ENCODE measurements at regions of chr6 and their contacts with region 1.

Region 1: DNA sequence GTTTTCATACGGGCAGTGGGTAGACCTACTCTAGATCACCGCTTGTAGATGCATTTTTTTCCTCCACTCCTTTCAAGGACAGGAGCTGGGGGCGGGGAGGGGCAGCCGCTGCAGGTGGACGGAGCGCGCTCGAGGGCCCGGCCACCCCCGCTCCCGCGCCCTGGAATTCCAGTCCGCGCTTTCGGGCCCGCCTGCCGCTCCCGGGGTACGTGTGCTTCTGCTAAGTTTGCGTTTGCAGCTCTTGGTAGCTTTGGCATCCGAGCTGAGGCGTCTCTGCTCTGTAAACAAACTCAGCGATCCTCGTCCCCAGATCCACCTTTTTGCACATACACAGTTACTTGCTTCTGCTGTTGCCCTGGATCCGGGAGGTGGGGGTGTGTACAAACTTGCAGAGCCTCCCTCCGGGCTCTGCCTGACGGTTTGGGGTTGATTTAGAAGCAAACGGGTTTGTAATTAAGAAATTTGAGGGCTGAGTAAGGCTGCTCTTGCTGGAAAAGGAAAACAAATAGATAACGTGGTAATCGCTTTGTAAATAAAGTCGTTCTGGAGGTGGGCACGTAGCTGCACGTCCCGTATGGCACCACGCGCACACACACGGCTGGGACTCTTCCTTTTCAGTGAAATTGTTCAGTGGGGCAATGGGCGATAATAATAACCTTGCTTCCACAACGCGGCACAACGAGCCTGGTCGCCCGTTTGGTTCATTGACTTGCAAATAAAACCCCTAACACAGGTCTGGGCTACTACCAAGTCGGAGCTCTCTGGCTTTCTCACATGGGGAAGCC is 976 bp upstream of the CITED2 start:
- DNase-seq: peak; percentile 64 to 93
- ATAC-seq: peak; percentile 63 to 79
- H3K4me3 ChIP-seq: peak overlapping the region; percentile 83
- H3K27ac ChIP-seq: peak overlapping the region; percentile 95 to 100
- H3K4me1 ChIP-seq: peaks cover 39% of the 10 kb centered on the region
- CTCF ChIP-seq: no peak
- EP300 ChIP-seq: no peak
- POLR2A ChIP-seq: no peak
- RAD21 ChIP-seq: peak; percentile 20 to 24; a peak in 4 of 5 replicates

Region 2: GRCh38 chr6:139452176-139452876 is 76.9 kb after region 1 on chr6:
- CTCF ChIA-PET with region 1: no interaction called
- POLR2A ChIA-PET with region 1: no interaction called
- DNase-seq: no peak
- ATAC-seq: no peak
- H3K4me3 ChIP-seq: no peak overlapping the region
- H3K27ac ChIP-seq: no peak overlapping the region
- H3K4me1 ChIP-seq: no peaks in the 10 kb centered on the region
- CTCF ChIP-seq: no peak
- EP300 ChIP-seq: no peak
- POLR2A ChIP-seq: no peak
- RAD21 ChIP-seq: no peak

Region 3: GRCh38 chr6:139540276-139540675 is 164.9 kb after region 1 on chr6:
- CTCF ChIA-PET with region 1: interaction called, 3 read pairs
- POLR2A ChIA-PET with region 1: interaction called, 12 read pairs
- DNase-seq: no peak
- ATAC-seq: no peak; a peak in 1 of 6 replicates
- H3K4me3 ChIP-seq: no peak overlapping the region
- H3K27ac ChIP-seq: peak overlapping the region; percentile 47 to 75; a peak in 5 of 6 replicates
- H3K4me1 ChIP-seq: peaks cover 33% of the 10 kb centered on the region
- CTCF ChIP-seq: no peak
- EP300 ChIP-seq: no peak
- POLR2A ChIP-seq: no peak
- RAD21 ChIP-seq: no peak

Region 4: DNA sequence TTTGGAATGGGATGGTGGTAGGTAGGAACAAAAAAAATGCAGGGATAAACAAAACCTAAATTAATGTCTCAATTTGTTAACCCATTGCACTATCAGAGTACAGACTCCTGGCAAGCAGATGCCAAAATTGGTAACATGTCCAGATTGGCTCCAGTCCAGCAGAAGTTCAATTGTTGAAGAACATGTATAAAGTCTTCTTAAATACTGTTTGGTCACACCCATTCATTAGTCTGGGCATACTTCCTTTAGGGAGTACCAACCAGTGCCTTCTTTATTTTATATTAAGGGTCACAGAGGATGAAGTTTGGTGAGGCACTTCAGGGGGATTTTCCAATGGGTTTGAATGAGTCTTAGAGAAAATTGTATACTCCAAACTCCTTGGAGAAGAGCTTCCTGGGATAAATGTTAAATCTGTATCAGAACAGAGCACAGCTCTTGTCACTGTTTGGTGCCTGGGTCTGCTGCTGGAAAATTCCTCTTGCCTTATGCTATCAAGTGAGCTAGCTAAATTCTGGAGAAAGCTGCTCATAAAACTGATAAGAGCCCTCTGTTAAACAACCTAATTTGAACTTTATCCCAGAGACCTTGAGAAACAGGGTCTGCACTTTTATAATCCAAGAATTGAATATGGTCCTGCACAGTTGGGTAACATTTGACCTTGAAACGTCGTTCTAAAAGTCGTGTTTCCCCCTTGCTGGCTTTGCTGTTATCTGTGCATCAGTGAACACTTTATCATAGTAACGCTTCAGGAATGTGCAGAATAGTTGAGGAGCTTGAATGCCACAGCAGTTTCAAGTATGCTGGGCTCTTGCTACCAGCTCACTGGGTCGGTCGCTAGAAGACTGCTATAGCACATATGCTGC is 333.1 kb after region 1 on chr6:
- CTCF ChIA-PET with region 1: interaction called, 3 read pairs
- POLR2A ChIA-PET with region 1: interaction called, 17 read pairs
- DNase-seq: peak; percentile 12 to 44
- ATAC-seq: peak; percentile 77 to 89; a peak in 5 of 6 replicates
- H3K4me3 ChIP-seq: no peak overlapping the region
- H3K27ac ChIP-seq: peak overlapping the region; percentile 25 to 30; a peak in 5 of 6 replicates
- H3K4me1 ChIP-seq: peaks cover 19% of the 10 kb centered on the region
- CTCF ChIP-seq: no peak
- EP300 ChIP-seq: no peak
- POLR2A ChIP-seq: no peak
- RAD21 ChIP-seq: 0 out of 5 replicates have a peak, but pooled peaks of 1 of the 2 experiments have one; percentile 5

Region 5: DNA sequence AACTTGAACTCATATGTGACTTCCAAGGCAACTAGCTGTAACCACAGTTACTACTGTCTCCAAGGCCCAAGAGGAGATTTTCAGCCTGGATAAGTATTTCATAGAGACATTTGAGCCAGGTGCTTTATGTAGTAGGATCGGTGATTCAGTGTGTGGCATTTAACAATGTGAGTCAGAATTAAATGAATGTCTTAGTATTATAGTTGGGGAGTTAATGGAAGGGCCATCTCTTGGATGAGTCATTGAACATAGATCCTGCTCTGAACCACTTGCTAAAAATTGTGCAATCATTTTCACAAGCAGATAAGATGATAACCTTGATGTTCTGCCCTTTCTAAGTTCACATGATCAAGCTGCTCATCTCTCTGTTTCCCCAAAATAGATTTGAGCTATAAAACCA is 667.9 kb after region 1 on chr6:
- CTCF ChIA-PET with region 1: interaction called, 3 read pairs
- POLR2A ChIA-PET with region 1: interaction called, 23 read pairs
- DNase-seq: peak; percentile 38 to 73
- ATAC-seq: peak; percentile 90 to 97
- H3K4me3 ChIP-seq: no peak overlapping the region
- H3K27ac ChIP-seq: peak overlapping the region in 1 of 2 experiments; percentile 69; a peak in 3 of 6 replicates
- H3K4me1 ChIP-seq: peaks cover 30% of the 10 kb centered on the region
- CTCF ChIP-seq: no peak
- EP300 ChIP-seq: peak; percentile 53 to 73; a peak in 2 of 5 replicates
- POLR2A ChIP-seq: no peak
- RAD21 ChIP-seq: peak; percentile 7 to 49; a peak in 3 of 5 replicates

Region 6: GRCh38 chr6:140441256-140441655 is 1065.8 kb after region 1 on chr6:
- CTCF ChIA-PET with region 1: no interaction called
- POLR2A ChIA-PET with region 1: interaction called, 16 read pairs
- DNase-seq: peak in 1 of 2 experiments; percentile 23
- ATAC-seq: peak in 1 of 2 experiments; percentile 59; a peak in 2 of 6 replicates
- H3K4me3 ChIP-seq: no peak overlapping the region
- H3K27ac ChIP-seq: no peak overlapping the region
- H3K4me1 ChIP-seq: no peaks in the 10 kb centered on the region
- CTCF ChIP-seq: peak; percentile 27; the same call in 1 of the 3 replicates
- EP300 ChIP-seq: no peak
- POLR2A ChIP-seq: no peak
- RAD21 ChIP-seq: peak; percentile 56 to 68